ENCODE measurements at regions of chr16 and their contacts with region 1.

Region 1: GRCh38 chr16:50065624-50066481 is at the start of gene HEATR3:
- DNase-seq: peak; percentile 94
- ATAC-seq: peak; percentile 96 to 97
- total RNA-seq, gene HEATR3: 11.5 to 13.1 TPM

Region 2: DNA sequence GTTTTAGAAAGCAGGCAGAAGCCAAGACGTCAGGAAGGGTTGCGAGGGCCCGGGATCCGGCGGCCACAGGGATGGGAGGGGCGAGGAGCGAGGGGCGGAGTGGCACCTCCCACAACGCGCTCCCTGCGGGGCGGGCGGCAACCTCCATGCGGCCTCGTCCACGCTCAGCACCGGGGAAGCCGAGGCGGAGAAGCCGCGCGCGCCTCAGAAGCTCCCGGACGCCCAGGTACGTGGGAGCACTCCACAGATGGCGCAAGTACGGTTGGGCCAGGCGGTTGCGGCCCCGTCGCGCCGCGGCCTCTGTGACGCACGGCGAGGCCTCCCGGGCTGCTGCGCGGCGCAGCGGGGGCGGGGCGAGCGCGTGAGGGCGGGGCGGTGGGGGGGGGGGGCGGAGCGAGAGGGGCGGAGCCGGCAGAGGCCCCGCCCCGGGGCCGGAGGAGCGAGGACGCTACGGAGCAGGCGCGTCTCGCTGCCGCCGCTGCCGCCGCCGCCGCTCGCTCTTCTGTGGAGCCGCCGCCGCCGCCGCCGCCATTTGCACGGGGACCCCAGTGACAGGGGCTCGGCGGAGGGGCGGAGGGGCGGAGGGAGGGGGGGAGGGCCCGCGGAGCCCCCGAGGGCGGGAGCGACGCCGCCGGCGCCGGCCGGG is 87.1 kb after region 1 on chr16 and contains the start of gene TENT4B:
- intact Hi-C with region 1: loop called in 1 of 2 experiments (anchors 10 kb)
- DNase-seq: peak; percentile 90
- ATAC-seq: peak; percentile 94 to 95
- total RNA-seq, gene TENT4B: 5.5 to 7.1 TPM

Region 3: GRCh38 chr16:50520451-50521245 is 454.8 kb after region 1 on chr16:
- intact Hi-C with region 1: no loop called
- DNase-seq: no peak
- ATAC-seq: no peak